ENCODE measurements at regions of chr12 and their contacts with region 1.

Region 1: GRCh38 chr12:32455607-32456071 is 56.3 kb downstream of the FGD4 start:
- DNase-seq: no peak
- ATAC-seq: peak; percentile 68

Region 2: GRCh38 chr12:32522331-32523221 is 66.9 kb after region 1 on chr12:
- intact Hi-C with region 1: no loop called
- DNase-seq: no peak
- ATAC-seq: peak; percentile 64

Region 3: GRCh38 chr12:32548691-32549281 is 93.1 kb after region 1 on chr12:
- intact Hi-C with region 1: loop called (anchors 10 kb)
- DNase-seq: no peak
- ATAC-seq: peak; percentile 73

Region 4: GRCh38 chr12:32659908-32660440 is 204.3 kb after region 1 on chr12:
- intact Hi-C with region 1: loop called (anchors 2 kb)
- DNase-seq: no peak
- ATAC-seq: no peak

Region 5: DNA sequence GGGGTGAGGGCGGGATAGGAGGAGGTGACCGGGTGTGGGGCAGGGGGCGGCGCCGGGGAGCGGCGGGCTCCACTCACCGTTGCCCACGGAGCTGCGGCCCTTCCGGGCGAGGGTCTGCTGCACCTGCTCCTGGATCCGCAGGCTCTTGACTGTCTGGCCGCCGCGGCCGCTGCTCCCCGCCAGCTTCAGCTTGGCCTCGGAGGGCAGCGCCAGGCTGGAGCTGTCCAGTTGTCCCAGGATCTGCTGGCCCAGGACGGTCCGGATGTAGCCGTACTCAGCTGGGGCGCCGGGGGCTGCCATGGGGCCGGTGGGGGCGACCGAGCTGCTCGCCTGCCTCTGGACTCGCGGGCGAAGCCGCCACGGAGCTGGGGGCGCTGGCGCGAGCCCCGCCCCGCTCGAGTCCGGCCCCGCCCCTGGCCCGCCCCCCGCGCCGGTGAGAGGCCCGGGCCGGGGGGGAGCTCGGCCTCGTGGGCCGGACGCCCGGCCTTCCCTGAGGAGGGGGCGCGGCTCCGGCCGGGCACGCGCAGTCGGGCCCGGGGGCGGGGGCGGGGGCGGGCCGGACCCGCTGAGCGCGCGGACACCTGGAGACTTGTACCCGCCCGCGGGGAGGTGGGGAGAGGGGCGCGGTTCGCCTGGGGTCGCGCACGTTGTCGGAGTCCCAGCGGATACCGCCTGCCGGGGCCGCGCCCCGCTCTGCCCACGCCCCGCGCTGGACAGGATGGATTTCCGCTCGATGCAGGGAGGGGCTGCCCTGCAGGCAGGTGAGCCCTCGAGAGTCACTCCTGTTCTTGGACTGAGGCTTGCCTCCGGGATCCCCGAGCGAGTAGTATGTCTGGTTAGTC is 441.0 kb after region 1 on chr12 and contains the start of gene PKP2:
- intact Hi-C with region 1: no loop called
- DNase-seq: peak; percentile 82
- ATAC-seq: peak; percentile 83
- total RNA-seq, gene PKP2: 423 TPM